ENCODE measurements at regions of chr1 and their contacts with region 1.

Region 1: GRCh38 chr1:2525920-2526823 is at the start of gene PANK4:
- DNase-seq: peak; percentile 80 to 90 (median 89)
- ATAC-seq: peak; percentile 95
- H3K4me3 ChIP-seq: peak within 1 kb of the TSS; percentile 65
- H3K4me3 Mint-ChIP-seq: peak within 1 kb of the TSS; percentile 88 to 100 (median 94)
- H3K27ac ChIP-seq: peak within 1 kb of the TSS; percentile 81
- H3K27ac Mint-ChIP-seq: peak within 1 kb of the TSS; percentile 87 to 98 (median 96)
- H3K4me1 ChIP-seq: peaks cover 44 to 47% of the 10 kb centered on the region in 2 donors
- H3K4me1 Mint-ChIP-seq: peaks cover 32 to 57% (median 44%) of the 10 kb centered on the region in 7 donors
- H3K27me3 ChIP-seq: peaks cover 4 to 7% of the 10 kb centered on the region in 2 donors
- H3K27me3 Mint-ChIP-seq: peaks cover 0 to 27% (median 0%) of the 10 kb centered on the region in 5 donors
- total RNA-seq, gene PANK4: 55.8 to 91.2 (median 72.6) TPM

Region 2: DNA sequence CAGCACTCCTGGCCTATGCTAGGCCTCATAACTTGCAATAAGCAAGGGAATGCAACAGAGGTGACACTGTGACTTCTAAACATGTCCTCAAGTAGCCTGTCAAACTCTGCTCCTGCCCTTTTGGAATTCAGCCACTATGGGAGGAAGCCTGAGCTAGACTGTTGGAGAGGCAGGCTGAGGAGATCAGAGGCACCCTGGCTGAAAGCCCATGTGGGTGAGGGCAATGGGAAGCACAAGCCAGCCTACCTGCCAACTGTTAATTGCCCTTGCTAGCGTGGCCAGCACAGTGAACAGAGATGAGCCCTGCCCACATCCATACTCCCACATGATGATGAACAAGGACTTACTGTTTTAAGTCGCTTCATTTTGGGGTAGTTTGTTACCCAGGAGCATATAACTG is 653.0 kb before region 1 on chr1:
- CTCF ChIA-PET with region 1: no interaction called
- POLR2A ChIA-PET with region 1: no interaction called
- intact Hi-C with region 1: no loop called
- DNase-seq: no peak
- ATAC-seq: no peak
- H3K4me3 ChIP-seq: no peak overlapping the region
- H3K4me3 Mint-ChIP-seq: peak overlapping the region in 1 of 10 donors; percentile 5
- H3K27ac ChIP-seq: no peak overlapping the region
- H3K27ac Mint-ChIP-seq: peak overlapping the region in 6 of 9 donors; percentile 14 to 76 (median 51)
- H3K4me1 ChIP-seq: peaks cover 36 to 54% of the 10 kb centered on the region in 2 donors
- H3K4me1 Mint-ChIP-seq: peaks cover 48 to 83% (median 82%) of the 10 kb centered on the region in 7 donors
- H3K27me3 ChIP-seq: no peaks in the 10 kb centered on the region
- H3K27me3 Mint-ChIP-seq: no peaks in the 10 kb centered on the region

Region 3: GRCh38 chr1:1919304-1920056 is 606.7 kb before region 1 on chr1:
- CTCF ChIA-PET with region 1: no interaction called
- POLR2A ChIA-PET with region 1: no interaction called
- intact Hi-C with region 1: loop called in 1 of 2 experiments (anchors 5 kb)
- DNase-seq: peak; percentile 99 to 100 (median 100)
- ATAC-seq: peak; percentile 95
- H3K4me3 ChIP-seq: peak overlapping the region; percentile 61
- H3K4me3 Mint-ChIP-seq: peak overlapping the region; percentile 52 to 79 (median 68)
- H3K27ac ChIP-seq: peak overlapping the region; percentile 58
- H3K27ac Mint-ChIP-seq: peak overlapping the region in 8 of 9 donors; percentile 51 to 89 (median 82)
- H3K4me1 ChIP-seq: peaks cover 7 to 16% of the 10 kb centered on the region in 2 donors
- H3K4me1 Mint-ChIP-seq: peaks cover 0 to 7% (median 0%) of the 10 kb centered on the region in 7 donors
- H3K27me3 ChIP-seq: no peaks in the 10 kb centered on the region
- H3K27me3 Mint-ChIP-seq: peaks cover 0 to 4% (median 0%) of the 10 kb centered on the region in 5 donors

Region 4: GRCh38 chr1:2233997-2234761 is 292.0 kb before region 1 on chr1:
- CTCF ChIA-PET with region 1: no interaction called
- POLR2A ChIA-PET with region 1: no interaction called
- intact Hi-C with region 1: no loop called
- DNase-seq: peak; percentile 52 to 82 (median 72)
- ATAC-seq: peak; percentile 80
- H3K4me3 ChIP-seq: peak overlapping the region; percentile 83
- H3K4me3 Mint-ChIP-seq: peak overlapping the region; percentile 89 to 100 (median 94)
- H3K27ac ChIP-seq: peak overlapping the region; percentile 78
- H3K27ac Mint-ChIP-seq: peak overlapping the region; percentile 90 to 99 (median 97)
- H3K4me1 ChIP-seq: peaks cover 64 to 78% of the 10 kb centered on the region in 2 donors
- H3K4me1 Mint-ChIP-seq: peaks cover 50 to 70% (median 61%) of the 10 kb centered on the region in 7 donors
- H3K27me3 ChIP-seq: no peaks in the 10 kb centered on the region
- H3K27me3 Mint-ChIP-seq: no peaks in the 10 kb centered on the region

Region 5: GRCh38 chr1:2290595-2291510 is 235.3 kb before region 1 on chr1:
- CTCF ChIA-PET with region 1: no interaction called
- POLR2A ChIA-PET with region 1: no interaction called
- intact Hi-C with region 1: loop called in 1 of 2 experiments (anchors 10 kb)
- DNase-seq: peak; percentile 44 to 83 (median 79)
- ATAC-seq: peak; percentile 82
- H3K4me3 ChIP-seq: peak overlapping the region; percentile 52
- H3K4me3 Mint-ChIP-seq: peak overlapping the region; percentile 81 to 94 (median 88)
- H3K27ac ChIP-seq: peak overlapping the region; percentile 68
- H3K27ac Mint-ChIP-seq: peak overlapping the region; percentile 95 to 97 (median 96)
- H3K4me1 ChIP-seq: peaks cover 49 to 91% of the 10 kb centered on the region in 2 donors
- H3K4me1 Mint-ChIP-seq: peaks cover 51 to 98% (median 79%) of the 10 kb centered on the region in 7 donors
- H3K27me3 ChIP-seq: no peaks in the 10 kb centered on the region
- H3K27me3 Mint-ChIP-seq: no peaks in the 10 kb centered on the region

Region 6: DNA sequence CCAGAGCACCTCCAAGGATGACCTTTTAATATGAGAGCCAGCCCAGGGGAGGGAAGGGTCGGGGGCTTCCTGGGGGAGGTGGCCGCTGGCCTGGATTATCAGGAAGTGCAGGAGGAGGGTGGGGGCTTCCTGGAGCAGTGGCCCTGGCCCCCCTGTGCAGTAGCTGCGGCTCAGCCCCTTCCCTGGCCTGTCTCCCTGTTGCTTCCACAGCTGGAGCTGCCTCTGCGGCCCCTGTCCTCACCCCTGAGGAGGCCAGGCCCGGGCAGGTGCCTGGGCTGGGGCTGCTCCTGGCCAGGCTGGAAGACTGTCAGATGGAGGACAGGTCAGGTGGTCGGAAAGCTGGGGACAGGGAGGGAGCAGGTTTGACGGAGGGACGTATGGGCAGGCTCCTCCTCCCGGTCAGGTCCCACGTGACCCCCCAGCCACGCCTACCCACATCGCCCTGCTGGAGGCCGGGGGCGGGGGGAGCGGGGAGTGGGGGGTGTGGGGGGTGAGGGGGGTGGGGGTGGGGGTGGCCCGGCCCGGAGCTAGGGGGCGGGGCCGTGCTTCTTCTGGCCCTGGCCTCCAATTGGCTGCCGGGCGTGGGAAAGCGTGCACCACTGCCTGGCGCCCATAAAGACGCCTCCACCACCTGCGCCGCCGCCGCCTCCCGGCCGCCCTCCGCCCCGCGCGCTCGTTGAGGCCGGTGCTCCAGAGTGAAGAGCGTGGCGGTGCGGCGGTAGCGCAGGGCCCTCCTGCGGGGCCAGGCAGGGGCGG is 19.8 kb after region 1 on chr1:
- CTCF ChIA-PET with region 1: interaction called, 30 read pairs
- POLR2A ChIA-PET with region 1: interaction called, 294 read pairs
- intact Hi-C with region 1: loop called (anchors 1 kb)
- DNase-seq: peak; percentile 83 to 91 (median 86)
- ATAC-seq: peak; percentile 74
- H3K4me3 ChIP-seq: peak overlapping the region; percentile 88
- H3K4me3 Mint-ChIP-seq: peak overlapping the region; percentile 27 to 97 (median 94)
- H3K27ac ChIP-seq: peak overlapping the region; percentile 97
- H3K27ac Mint-ChIP-seq: peak overlapping the region in 8 of 9 donors; percentile 28 to 98 (median 97)
- H3K4me1 ChIP-seq: peaks cover 18 to 40% of the 10 kb centered on the region in 2 donors
- H3K4me1 Mint-ChIP-seq: peaks cover 0 to 41% (median 18%) of the 10 kb centered on the region in 7 donors
- H3K27me3 ChIP-seq: no peaks in the 10 kb centered on the region
- H3K27me3 Mint-ChIP-seq: peaks cover 0 to 16% (median 0%) of the 10 kb centered on the region in 5 donors

Region 7: DNA sequence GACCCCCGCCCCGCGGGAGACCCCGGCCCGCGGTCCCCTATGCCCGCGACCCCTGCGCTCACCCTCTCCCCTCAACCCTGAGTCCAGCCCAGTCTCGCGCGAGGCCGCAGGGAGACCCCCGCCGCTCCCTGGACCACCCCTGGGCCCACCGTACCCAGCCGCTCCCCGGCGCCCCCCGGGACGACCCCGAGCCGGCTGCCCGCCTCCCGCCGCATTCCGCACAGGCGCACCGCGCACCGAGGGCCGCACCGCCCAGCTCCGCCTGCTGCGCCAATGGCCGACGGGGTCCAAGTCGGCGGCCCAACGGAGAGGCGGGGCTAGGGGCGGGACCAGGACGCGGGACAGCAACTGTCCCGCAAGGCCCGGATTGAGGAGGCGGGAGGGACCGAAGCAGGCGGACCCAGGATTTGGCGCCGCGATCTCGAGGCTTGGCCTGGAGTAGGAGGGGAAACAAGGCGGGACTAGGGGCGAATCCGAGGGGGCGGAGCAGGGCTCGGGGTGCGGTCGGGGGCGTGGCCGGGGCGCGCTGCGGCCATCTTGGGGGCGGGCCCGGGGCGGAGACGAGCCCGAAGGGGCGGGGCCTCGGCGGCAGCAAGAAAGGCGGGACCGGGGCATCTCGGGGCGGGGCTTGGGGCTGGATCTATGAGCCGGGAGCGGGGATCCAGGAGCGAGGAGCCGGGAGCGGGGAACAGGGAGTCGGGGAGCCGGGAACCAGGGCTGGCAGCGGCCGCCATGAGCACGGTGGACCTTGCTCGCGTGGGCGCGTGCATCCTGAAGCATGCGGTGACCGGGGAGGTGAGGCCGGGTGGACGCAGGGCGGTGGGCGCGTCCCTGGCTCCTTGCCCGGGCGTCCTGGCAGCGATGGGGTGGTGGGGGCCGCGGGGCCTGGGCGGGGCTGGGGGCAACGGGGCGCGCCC is 60.2 kb after region 1 on chr1 and contains the start of gene PRXL2B:
- CTCF ChIA-PET with region 1: interaction called, 4 read pairs
- POLR2A ChIA-PET with region 1: interaction called, 41 read pairs
- intact Hi-C with region 1: loop called (anchors 1 kb)
- DNase-seq: peak; percentile 90 to 100 (median 96)
- ATAC-seq: peak; percentile 86
- H3K4me3 ChIP-seq: peak within 1 kb of the TSS; percentile 78
- H3K4me3 Mint-ChIP-seq: peak within 1 kb of the TSS; percentile 81 to 96 (median 92)
- H3K27ac ChIP-seq: peak within 1 kb of the TSS; percentile 87
- H3K27ac Mint-ChIP-seq: peak within 1 kb of the TSS; percentile 87 to 99 (median 96)
- H3K4me1 ChIP-seq: peaks cover 27 to 30% of the 10 kb centered on the region in 2 donors
- H3K4me1 Mint-ChIP-seq: peaks cover 24 to 45% (median 38%) of the 10 kb centered on the region in 7 donors
- H3K27me3 ChIP-seq: no peaks in the 10 kb centered on the region
- H3K27me3 Mint-ChIP-seq: no peaks in the 10 kb centered on the region
- total RNA-seq, gene PRXL2B: 12.3 to 37.0 (median 26.7) TPM

Region 8: GRCh38 chr1:3624200-3625136 is 1098.3 kb after region 1 on chr1 and contains the start of gene TPRG1L:
- CTCF ChIA-PET with region 1: no interaction called
- POLR2A ChIA-PET with region 1: no interaction called
- intact Hi-C with region 1: loop called in 1 of 2 experiments (anchors 10 kb)
- DNase-seq: peak; percentile 97 to 100 (median 99)
- ATAC-seq: peak; percentile 98
- H3K4me3 ChIP-seq: peak within 1 kb of the TSS; percentile 95
- H3K4me3 Mint-ChIP-seq: peak within 1 kb of the TSS; percentile 91 to 99 (median 96)
- H3K27ac ChIP-seq: peak within 1 kb of the TSS; percentile 78
- H3K27ac Mint-ChIP-seq: peak within 1 kb of the TSS; percentile 92 to 98 (median 96)
- H3K4me1 ChIP-seq: peaks cover 22% of the 10 kb centered on the region in 2 donors
- H3K4me1 Mint-ChIP-seq: peaks cover 27 to 57% (median 42%) of the 10 kb centered on the region in 7 donors
- H3K27me3 ChIP-seq: no peaks in the 10 kb centered on the region
- H3K27me3 Mint-ChIP-seq: peaks cover 0 to 13% (median 0%) of the 10 kb centered on the region in 5 donors
- total RNA-seq, gene TPRG1L: 15.6 to 61.4 (median 37.8) TPM